ENCODE measurements at regions of chr16 and their contacts with region 1.

Region 1: GRCh38 chr16:84318091-84318975 is 23.7 kb downstream of the WFDC1 start:
- DNase-seq: no peak
- ATAC-seq: no peak
- H3K4me3 ChIP-seq: no peak overlapping the region
- H3K27ac ChIP-seq: no peak overlapping the region
- H3K4me1 ChIP-seq: peaks cover 6% of the 10 kb centered on the region; the same call in 2 of the 3 replicates
- CTCF ChIP-seq: no peak
- EP300 ChIP-seq: no peak
- POLR2A ChIP-seq: no peak
- RAD21 ChIP-seq: no peak

Region 2: DNA sequence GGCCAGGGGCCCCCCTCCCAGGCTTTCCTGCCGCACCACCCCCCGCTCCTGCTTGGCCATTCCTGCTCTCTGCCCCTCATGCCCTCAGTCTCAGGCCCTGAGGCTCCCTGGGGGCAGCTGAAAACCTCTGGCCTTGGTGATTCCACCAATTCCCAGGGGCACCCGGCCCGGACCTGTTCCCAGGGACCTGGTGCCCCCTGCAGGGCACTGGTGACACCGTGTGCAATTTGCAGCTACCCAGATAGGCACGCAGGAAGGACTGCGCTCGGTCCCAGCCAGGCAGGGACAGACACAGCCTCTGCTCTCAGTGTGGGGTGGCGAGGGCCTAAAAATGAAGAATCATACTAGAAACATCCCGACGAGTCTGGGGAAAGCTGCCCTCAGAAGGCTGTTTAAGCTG is 10.2 kb before region 1 on chr16:
- CTCF ChIA-PET with region 1: interaction called, 10 read pairs
- POLR2A ChIA-PET with region 1: no interaction called
- DNase-seq: peak; percentile 64
- ATAC-seq: peak; percentile 87 to 96
- H3K4me3 ChIP-seq: no peak overlapping the region
- H3K27ac ChIP-seq: no peak overlapping the region
- H3K4me1 ChIP-seq: no peaks in the 10 kb centered on the region
- CTCF ChIP-seq: peak; percentile 64
- EP300 ChIP-seq: no peak
- POLR2A ChIP-seq: no peak
- RAD21 ChIP-seq: peak; percentile 72 to 81

Region 3: DNA sequence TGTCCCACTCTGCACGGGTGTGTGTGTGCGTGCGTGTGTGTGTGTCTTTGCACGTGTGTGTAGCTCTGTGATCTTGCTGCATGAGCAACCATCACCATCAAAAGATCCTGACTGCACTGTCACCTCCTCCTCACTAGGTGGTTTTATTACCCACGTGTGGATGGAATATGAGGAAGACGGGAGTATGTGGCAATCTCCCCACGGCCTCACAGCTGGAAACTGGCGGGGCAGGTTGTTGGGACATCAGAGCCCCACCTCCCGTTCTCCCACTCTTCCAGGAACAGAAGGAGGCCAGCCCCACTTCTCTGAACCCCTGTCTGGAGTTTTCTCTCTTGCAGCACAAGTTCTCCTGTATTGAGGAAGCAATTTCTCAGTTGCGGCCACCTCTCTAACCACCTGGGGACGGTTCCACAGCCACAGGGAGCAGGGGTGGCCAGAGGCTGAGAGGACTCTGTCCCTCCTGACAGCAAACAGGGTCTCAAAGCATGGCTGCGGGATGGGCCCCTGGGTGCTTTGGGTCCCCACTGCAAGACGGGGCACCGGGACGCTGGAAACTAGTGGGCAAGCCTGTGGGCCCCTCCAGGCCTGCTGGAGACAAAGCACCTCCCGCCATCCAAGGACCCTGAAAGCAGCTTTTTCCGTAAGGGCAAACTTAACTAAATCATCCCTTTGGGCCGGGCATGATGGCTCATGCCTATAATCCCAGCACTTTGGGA is 22.1 kb after region 1 on chr16:
- CTCF ChIA-PET with region 1: no interaction called
- POLR2A ChIA-PET with region 1: no interaction called
- DNase-seq: peak; percentile 26 to 37
- ATAC-seq: peak; percentile 62 to 64
- H3K4me3 ChIP-seq: no peak overlapping the region
- H3K27ac ChIP-seq: no peak overlapping the region
- H3K4me1 ChIP-seq: no peaks in the 10 kb centered on the region
- CTCF ChIP-seq: no peak
- EP300 ChIP-seq: no peak
- POLR2A ChIP-seq: no peak
- RAD21 ChIP-seq: no peak

Region 4: GRCh38 chr16:84380405-84380804 is 62.1 kb after region 1 on chr16:
- CTCF ChIA-PET with region 1: no interaction called
- POLR2A ChIA-PET with region 1: no interaction called
- DNase-seq: no peak
- ATAC-seq: no peak
- H3K4me3 ChIP-seq: no peak overlapping the region
- H3K27ac ChIP-seq: no peak overlapping the region
- H3K4me1 ChIP-seq: peaks cover 8% of the 10 kb centered on the region
- CTCF ChIP-seq: no peak
- EP300 ChIP-seq: no peak
- POLR2A ChIP-seq: no peak
- RAD21 ChIP-seq: no peak